Activated CD4-positive, alpha-beta T cell treated with anti-CD3 and anti-CD28 coated beads, Interleukin-2, amount 10 ng/mL, durations not matched to agents 24 days and 14 days (primary cell): ENCODE measurements at regions of chr21 and their contacts with region 1.

Region 1: DNA sequence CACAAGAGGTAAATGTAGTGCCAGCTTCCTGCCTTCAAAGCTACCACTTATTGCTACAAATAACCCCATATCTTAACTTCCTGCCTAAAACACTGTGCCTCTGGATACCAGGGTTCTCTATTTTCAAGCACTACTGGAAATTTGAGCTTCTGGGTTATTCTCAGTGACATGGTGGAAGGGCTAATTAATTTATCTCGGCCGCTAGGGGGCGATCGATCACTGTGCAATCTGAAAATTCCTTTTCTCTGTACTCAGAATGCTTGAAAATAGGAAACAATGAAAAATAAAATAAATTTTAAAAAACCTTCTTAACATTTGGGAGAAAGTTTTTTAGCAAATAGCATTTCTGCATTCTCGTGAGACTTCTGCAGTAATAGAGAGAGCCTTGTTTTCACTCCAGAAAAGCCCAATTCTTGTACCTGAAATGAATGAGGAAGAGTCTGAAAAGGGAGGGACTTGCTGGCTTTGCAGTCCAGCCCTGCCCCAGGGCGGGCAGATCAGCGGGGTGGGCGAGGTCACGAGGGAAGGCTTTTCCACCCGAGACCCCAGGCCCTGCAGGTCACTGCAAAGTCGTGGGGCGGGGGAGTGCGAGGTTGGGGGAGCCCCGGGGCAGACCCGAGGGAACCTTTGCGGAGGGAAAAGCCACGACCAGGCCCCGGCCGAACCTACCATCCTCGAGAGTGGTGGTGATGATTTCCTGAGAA is 276.7 kb downstream of the PCP4 start:
- DNase-seq: peak; percentile 77
- H3K4me3 Mint-ChIP-seq: no peak overlapping the region
- H3K27ac Mint-ChIP-seq: no peak overlapping the region
- H3K4me1 Mint-ChIP-seq: no peaks in the 10 kb centered on the region
- H3K27me3 Mint-ChIP-seq: no peaks in the 10 kb centered on the region

Region 2: DNA sequence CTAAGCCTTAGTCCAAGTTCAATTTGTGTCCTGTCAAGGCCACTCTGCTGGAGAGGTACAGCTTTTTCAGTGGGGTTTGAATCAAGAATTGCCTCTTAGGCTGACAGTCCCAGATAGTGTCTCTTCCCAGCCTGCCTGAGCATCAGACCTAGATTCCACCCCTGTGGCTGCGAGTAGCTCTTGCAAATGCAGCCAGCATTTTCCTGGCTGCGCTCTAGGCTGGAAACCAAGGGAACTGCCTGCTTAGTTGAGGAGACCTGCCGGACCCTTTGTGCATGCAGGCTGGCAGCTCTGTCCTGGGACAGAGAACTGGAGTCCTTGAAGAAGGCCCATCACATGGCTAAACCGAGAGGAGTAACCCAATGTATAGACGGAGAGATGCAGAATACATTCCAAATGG is 16.9 kb after region 1 on chr21:
- intact Hi-C with region 1: no loop called
- DNase-seq: no peak
- H3K4me3 Mint-ChIP-seq: no peak overlapping the region
- H3K27ac Mint-ChIP-seq: no peak overlapping the region
- H3K4me1 Mint-ChIP-seq: no peaks in the 10 kb centered on the region
- H3K27me3 Mint-ChIP-seq: no peaks in the 10 kb centered on the region

Region 3: GRCh38 chr21:40385892-40386599 is 242.1 kb after region 1 on chr21:
- intact Hi-C with region 1: loop called (anchors 2 kb)
- DNase-seq: peak; percentile 77
- H3K4me3 Mint-ChIP-seq: no peak overlapping the region
- H3K27ac Mint-ChIP-seq: no peak overlapping the region
- H3K4me1 Mint-ChIP-seq: no peaks in the 10 kb centered on the region
- H3K27me3 Mint-ChIP-seq: no peaks in the 10 kb centered on the region

Region 4: GRCh38 chr21:41068967-41069642 is 925.1 kb after region 1 on chr21:
- intact Hi-C with region 1: loop called (anchors 2 kb)
- DNase-seq: peak; percentile 89
- H3K4me3 Mint-ChIP-seq: peak overlapping the region; percentile 47
- H3K27ac Mint-ChIP-seq: no peak overlapping the region
- H3K4me1 Mint-ChIP-seq: peaks cover 6% of the 10 kb centered on the region
- H3K27me3 Mint-ChIP-seq: peaks cover 18% of the 10 kb centered on the region